ENCODE measurements at regions of chr12 and their contacts with region 1.

Region 1: DNA sequence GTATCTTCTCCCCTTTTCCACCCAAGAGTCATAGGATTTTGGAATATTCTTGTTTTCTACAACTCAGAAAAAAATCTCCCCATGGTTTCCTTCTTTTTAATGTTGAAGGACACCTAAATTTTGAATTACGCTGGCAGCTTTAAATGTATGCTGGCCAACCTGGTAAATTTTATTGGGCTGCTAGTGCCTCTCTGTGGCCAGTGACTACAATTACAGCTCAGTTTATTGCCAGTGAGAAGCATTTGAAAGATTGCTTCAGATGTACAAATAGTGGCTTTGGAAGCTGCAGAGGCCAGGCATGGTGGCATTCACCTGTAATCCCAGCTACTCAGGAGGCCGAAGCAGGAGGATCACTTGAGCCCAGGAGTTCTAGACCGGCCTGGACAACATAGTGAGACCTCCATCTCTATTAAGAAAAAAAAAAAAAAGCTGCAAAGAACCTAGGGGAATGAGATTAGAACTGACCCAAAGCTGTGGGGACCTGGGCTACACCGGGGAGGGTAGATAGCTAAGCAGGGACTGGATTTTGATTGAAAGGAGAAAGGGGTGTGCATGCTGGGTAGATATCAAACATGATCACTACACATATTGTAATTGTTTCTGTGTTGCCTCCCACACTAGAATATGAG is 7.6 kb upstream of the RAB21 start:
- DNase-seq: peak; percentile 49
- CTCF ChIP-seq: peak; percentile 89

Region 2: DNA sequence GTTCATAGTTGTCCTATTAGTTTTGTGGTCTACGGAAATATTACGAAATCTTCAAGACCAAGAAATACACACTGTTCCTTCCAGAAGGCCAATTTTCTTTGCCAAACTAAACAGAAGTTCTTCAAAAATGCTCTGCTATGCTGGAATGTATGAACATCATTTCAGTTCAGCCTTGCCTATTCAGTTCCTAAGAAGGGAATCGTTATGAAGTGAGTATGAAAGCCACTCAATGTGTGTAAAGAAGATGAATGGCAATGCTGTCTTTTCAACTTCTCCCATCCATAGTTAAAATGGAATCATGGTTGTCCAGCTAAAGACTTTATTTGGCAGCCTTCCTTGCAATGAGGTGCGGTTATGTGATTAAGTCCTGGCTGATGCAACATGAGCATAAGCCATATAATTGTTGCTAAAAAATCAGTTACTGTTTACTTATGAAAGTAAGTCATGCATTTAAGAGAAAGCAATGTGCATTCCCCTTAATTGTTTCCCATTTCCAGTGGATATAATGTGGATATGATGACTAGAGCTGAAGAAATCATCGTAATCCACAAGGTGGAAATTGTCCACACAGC is 752.8 kb before region 1 on chr12:
- CTCF ChIA-PET with region 1: no interaction called
- POLR2A ChIA-PET with region 1: no interaction called
- DNase-seq: no peak
- CTCF ChIP-seq: no peak

Region 3: GRCh38 chr12:71636704-71637115 is 110.4 kb before region 1 on chr12:
- CTCF ChIA-PET with region 1: interaction called, 51 read pairs
- POLR2A ChIA-PET with region 1: no interaction called
- DNase-seq: peak; percentile 50
- CTCF ChIP-seq: peak; percentile 74

Region 4: GRCh38 chr12:71663561-71664294 is 83.4 kb before region 1 on chr12 and contains the start of gene ZFC3H1:
- CTCF ChIA-PET with region 1: interaction called, 15 read pairs
- POLR2A ChIA-PET with region 1: interaction called, 3 read pairs
- DNase-seq: peak; percentile 92
- CTCF ChIP-seq: peak; percentile 33

Region 5: GRCh38 chr12:71694099-71694820 is 52.8 kb before region 1 on chr12:
- CTCF ChIA-PET with region 1: interaction called, 16 read pairs
- POLR2A ChIA-PET with region 1: no interaction called
- DNase-seq: peak; percentile 56
- CTCF ChIP-seq: no peak

Region 6: GRCh38 chr12:71760471-71760870 is 13.4 kb after region 1 on chr12:
- CTCF ChIA-PET with region 1: interaction called, 25 read pairs
- POLR2A ChIA-PET with region 1: interaction called, 3 read pairs
- DNase-seq: no peak
- CTCF ChIP-seq: no peak

Region 7: DNA sequence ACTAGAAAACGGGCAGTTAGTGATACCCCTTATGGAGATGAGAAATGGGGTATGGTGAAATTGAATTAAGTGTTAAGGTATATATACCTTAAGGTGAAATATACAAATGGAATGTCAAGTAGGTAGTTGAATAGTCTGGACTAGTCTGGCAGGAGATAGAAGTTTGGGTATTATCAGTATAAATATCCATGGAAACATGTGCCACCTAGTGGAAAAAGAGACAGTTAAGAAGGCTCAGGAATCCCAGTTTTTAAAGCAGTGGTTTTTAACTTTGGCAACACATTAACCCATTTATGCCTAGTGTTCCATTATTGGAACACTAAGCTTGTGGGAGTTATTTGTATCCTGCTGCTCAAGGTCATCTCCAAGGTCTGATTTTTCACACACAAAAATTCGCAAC is 153.0 kb after region 1 on chr12:
- CTCF ChIA-PET with region 1: no interaction called
- POLR2A ChIA-PET with region 1: no interaction called
- DNase-seq: no peak
- CTCF ChIP-seq: no peak

Measured in GM10248 (cell line).